WTC11 (cell line): ENCODE measurements at regions of chr1 and their contacts with region 1.

Region 1: DNA sequence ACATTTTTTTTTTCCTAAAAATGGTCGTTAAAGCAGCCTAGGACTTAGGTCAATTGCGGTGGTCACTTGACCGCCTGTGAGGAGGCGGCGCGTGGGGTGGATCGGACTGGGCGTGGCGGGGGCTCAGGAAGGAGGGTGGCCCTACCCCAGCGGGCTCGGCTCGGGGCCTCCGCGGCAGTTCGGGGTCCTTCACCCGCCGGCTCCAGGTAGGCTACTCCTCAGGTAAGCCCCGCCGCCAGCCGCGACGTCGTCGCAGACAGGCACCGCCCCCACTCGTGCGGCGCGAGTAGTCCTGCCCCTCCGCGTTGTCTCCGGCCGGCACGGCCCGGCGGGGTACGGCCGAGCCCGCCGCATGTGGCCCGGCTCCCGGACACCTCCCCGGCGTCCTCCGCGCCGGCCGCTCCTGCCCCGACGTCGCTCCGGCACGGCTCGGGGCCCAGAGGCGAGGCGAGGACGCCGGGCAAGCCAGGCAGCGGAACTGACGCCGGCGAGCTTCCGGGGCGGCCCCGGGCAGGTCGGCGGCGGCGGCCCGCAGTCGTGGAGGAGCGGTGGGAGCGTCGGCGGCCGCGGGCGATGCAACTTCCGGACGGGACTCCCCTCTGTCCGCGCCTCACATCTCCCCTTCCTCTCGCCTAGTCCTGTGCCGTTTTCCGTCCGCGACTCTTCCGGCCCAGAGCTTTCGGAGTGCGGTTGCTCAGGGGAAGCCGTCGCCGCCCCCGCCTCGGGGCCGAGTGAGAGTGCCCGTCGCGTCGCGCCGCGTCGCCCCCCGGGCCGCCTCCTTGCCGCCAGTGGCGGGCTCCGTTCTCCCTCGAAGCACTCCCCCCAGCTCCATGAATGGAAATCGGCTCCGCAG is at the start of gene AGO3:
- DNase-seq: peak; percentile 85
- ATAC-seq: peak; percentile 84
- H3K4me3 Mint-ChIP-seq: peak within 1 kb of the TSS; percentile 91
- H3K27ac Mint-ChIP-seq: peak within 1 kb of the TSS; percentile 98
- H3K4me1 Mint-ChIP-seq: peaks cover 45% of the 10 kb centered on the region
- H3K27me3 Mint-ChIP-seq: no peaks in the 10 kb centered on the region
- CTCF ChIP-seq: no peak
- total RNA-seq, gene AGO3: 26.8 to 30.7 TPM (median 27.0 TPM) in 3 replicates

Region 2: DNA sequence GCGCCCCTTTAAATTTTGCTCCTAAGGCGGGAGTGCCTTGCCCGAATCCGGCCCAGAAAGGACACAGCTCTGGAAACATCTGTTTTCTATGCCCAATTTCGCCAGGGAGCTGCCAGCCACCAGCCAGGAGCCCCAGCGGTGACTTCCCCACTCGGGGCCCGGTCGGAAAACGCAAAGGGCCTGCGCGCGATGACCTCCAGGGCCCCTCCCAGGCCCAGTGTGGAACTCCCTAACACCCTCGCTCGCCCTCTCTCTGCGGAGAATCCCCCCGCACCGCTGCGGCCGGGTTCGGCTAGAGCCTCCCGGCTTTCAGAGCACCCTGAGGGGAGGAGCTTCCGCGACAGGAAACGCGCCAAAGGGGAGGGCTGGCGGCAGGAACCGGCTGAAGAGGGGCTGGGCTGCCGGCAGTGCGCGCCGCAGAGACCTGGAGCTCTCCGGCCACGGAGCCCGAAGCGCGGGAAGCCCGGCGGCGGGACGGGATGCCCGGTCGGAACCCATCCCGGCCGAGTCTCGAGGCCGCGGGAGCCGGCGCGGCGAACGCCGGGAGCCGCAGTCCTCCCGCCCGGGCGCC is 161.5 kb before region 1 on chr1:
- CTCF ChIA-PET with region 1: no interaction called
- POLR2A ChIA-PET with region 1: interaction called, 14 read pairs
- DNase-seq: peak; percentile 92
- ATAC-seq: peak; percentile 75
- H3K4me3 Mint-ChIP-seq: peak overlapping the region; percentile 99
- H3K27ac Mint-ChIP-seq: peak overlapping the region; percentile 79
- H3K4me1 Mint-ChIP-seq: peaks cover 3% of the 10 kb centered on the region; the same call in 1 of the 2 replicates
- H3K27me3 Mint-ChIP-seq: no peaks in the 10 kb centered on the region; the same call in 1 of the 2 replicates
- CTCF ChIP-seq: no peak